ENCODE measurements at regions of chr12 and their contacts with region 1.

Region 1: GRCh38 chr12:6752921-6753771 is at the start of gene MLF2:
- DNase-seq: peak; percentile 99
- total RNA-seq, gene MLF2: 135 TPM

Region 2: DNA sequence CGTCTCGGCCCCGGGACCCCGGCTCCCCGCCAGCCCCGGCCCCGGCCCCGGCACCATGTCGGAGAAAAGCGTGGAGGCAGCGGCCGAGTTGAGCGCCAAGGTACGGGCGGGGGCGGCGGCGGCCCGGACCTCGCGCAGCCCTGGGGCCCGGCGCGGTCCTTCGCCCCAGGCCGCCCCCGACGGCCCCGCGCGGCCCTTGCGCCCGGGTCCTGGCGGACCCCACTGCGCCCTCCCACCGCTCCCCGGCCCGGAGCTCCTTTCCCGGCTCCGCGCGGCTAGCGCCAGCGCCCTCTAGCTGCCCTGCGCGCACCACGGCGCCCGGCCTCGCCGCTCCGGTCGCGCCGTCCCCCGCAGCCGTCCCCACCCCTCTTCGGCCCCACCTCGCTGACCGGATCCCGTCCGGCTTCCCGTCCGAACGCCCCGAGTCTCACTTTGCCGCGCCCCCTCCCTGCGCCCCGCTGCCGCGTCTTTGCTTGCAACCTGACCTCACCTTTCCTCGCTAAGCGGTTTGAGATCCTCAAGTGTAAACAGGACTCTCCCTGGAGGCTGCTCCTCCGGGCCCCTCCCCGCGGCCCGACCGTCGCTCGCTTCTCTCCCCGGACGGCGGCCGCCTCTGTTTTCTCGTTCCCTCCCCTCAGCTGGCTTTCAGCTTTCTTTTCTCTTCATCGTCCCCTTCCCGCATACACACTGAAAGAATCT is 13.7 kb after region 1 on chr12:
- intact Hi-C with region 1: loop called (anchors 1 kb)
- DNase-seq: peak; percentile 93

Region 3: DNA sequence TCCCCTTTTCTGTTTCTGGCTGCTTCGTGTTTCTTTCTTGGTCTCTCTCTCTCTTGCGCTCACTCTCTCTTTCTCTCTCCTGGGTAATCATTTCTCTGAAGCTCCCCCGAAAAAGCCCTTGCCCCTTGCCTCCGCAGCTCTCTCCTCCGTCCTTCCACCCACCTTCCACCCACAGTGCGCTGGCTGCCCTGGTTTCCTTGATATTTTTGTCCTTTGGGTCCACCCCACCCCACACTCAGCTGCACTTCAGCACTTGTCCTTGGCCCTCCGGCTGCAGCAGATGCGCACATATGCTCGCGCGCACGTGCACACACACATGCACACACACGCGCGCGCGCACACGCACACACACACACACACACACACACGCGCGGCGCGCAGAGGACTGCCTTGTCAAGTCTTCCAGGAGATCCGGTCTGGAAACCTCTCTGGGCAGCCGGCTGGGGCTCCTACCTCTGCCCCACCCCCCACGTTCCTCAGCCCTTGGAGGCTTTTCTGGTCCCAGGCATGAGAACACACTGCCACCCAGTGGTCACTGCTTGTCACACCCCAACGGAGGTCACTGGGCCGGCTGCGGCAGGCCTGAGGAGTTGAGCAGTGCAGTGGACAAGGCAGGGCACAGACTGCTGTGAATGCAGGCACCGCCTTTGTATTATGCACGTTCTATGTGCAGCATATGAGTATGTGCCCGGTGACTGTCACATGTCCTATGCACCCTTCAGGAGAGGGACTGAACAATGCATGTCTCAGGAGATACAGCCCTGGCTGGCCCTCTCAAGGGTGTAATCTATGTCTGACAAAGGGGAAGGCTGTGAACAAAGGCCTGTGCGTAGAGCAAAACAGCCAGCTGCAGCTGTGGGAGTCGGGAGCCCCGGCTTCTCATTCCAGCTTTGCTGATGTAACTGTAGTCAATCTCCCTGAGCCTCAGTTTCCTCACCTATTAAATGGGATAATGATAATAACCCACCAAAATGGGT is 25.7 kb after region 1 on chr12:
- intact Hi-C with region 1: loop called (anchors 1 kb)
- DNase-seq: peak; percentile 96

Region 4: DNA sequence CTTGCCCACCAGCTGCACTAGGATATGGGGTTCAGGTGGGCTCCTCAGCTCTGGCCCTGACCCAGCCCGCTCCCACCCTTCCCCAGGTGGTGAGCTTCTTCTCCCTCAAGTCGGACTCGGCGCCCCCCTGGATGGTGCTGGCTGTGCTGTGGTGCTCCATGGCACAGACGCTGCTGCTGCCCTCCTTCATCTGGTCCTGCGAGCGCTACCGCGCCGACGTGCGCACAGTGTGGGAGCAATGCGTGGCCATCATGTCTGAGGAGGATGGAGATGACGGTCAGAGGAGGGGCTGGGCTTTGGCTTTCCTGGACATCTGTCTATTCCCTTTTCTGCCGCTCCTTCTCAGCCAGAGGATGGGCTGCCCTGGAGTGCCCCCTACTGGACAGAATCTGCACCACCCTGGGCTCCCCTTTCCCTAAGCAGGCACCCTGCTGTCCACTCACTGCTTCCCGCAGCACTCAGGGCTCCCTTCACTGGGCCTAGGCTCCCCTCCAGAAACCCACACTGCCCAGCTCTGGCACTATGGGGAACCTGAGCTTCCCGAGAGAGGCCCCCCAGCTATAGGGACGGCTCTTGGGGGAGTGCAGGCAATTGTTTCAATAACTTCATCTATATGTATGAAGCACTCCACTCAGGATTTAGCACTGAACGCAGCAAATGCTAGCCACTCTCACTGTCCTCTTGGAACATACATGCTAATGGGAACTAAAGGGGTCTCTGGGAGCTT is 72.4 kb after region 1 on chr12:
- intact Hi-C with region 1: loop called (anchors 5 kb)
- DNase-seq: peak; percentile 93

Region 5: GRCh38 chr12:7042842-7043241 is 289.7 kb after region 1 on chr12:
- intact Hi-C with region 1: no loop called
- DNase-seq: no peak